ENCODE measurements at regions of chr12 and their contacts with region 1.

Region 1: DNA sequence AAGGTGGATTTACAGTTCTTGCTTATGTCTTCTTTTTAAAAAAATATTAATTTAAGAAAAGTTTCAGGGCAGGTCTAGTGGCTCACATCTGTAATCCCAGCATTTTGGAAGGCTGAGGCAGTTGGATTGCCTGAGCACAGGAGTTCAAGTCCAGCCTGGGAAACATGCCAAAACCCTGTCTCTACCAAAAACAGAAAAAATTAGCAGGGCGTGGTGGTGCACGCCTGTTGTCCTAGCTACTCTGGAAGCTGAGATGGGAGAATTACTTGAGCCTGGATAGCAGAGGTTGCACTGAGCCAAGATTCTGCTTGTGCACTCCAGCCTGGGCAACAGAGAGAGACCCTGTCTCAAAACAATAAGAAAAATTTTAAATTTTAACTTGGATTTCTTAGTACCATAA is 5.4 kb upstream of the TAS2R46 start:
- DNase-seq: peak in 1 of 2 donors; percentile 28
- ATAC-seq: peak in 1 of 2 donors; percentile 84
- H3K4me3 ChIP-seq: no peak overlapping the region
- H3K27ac ChIP-seq: no peak overlapping the region
- H3K4me1 ChIP-seq: peaks cover 0 to 13% of the 10 kb centered on the region in 2 donors
- H3K27me3 ChIP-seq: no peaks in the 10 kb centered on the region
- CTCF ChIP-seq: no peak
- POLR2A ChIP-seq: no peak

Region 2: GRCh38 chr12:11015775-11016430 is 51.6 kb before region 1 on chr12:
- in situ Hi-C with region 1: no loop called
- intact Hi-C with region 1: loop called (anchors 5 kb)
- DNase-seq: no peak
- ATAC-seq: no peak
- H3K4me3 ChIP-seq: no peak overlapping the region
- H3K27ac ChIP-seq: no peak overlapping the region
- H3K4me1 ChIP-seq: no peaks in the 10 kb centered on the region
- H3K27me3 ChIP-seq: no peaks in the 10 kb centered on the region
- CTCF ChIP-seq: no peak
- POLR2A ChIP-seq: no peak

Region 3: DNA sequence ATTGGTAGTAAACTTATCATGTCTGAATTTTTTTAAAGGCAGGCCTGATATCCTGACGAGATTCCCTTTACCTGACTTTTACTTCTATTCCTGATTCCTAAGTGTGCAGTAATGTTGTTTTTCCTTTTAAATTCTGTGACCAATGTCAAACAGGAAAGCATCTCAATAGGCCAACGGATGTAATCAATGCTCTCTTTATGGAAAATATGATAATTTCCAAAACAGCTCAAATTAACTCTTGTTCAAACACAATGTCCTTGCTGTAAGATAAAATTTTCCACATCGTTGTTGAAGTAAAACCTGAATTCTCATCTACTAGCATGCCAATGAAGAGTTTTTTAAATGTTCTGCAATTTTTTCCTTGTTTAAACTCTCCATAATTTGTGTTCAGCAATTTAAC is 28.3 kb before region 1 on chr12:
- in situ Hi-C with region 1: no loop called
- intact Hi-C with region 1: loop called (anchors 1 kb)
- DNase-seq: no peak
- ATAC-seq: no peak
- H3K4me3 ChIP-seq: no peak overlapping the region
- H3K27ac ChIP-seq: no peak overlapping the region
- H3K4me1 ChIP-seq: no peaks in the 10 kb centered on the region
- H3K27me3 ChIP-seq: no peaks in the 10 kb centered on the region
- CTCF ChIP-seq: no peak
- POLR2A ChIP-seq: no peak

Measured in gastrocnemius medialis (tissue), 4 donors.